ENCODE measurements at regions of chr16 and their contacts with region 1.

Region 1: DNA sequence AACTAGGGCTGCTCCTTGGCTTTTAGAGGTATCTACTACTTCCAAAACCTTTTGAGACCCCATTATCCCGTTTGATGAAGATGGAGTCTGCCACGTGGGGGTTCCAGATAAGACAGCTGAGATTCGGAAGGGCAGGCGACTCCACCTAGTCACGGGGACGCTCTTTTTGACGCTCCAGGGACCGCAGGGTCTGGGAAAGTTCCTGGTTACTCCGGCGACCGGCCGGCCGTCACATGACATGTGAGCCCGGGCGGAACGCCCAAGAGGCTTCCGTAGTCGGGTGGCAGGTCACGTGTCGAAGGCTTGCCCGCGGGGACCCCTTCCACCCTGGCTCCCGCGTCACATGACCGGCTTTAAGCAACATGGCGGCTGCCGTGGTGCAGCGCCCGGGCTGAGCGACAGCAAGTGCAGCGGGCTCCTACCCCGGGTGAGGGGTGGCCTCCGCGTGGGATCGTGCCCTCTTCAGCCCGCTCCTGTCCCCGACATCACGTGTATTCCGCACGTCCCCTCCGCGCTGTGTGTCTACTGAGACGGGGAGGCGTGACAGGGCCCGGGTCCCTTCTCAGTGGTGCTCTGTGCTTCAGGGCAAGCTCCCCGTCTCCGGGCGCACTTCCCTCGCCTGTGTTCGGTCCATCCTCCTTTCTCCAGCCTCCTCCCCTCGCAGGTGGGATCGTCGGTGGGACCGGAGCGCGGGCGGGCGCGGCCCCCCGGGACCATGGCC is at the start of gene SPNS1:
- DNase-seq: peak; percentile 97
- ATAC-seq: peak; percentile 96
- H3K4me3 Mint-ChIP-seq: peak within 1 kb of the TSS; percentile 98
- H3K27ac Mint-ChIP-seq: peak within 1 kb of the TSS; percentile 97
- H3K4me1 Mint-ChIP-seq: peaks cover 35% of the 10 kb centered on the region
- H3K27me3 Mint-ChIP-seq: no peaks in the 10 kb centered on the region
- total RNA-seq, gene SPNS1: 28.3 to 29.0 TPM

Region 2: DNA sequence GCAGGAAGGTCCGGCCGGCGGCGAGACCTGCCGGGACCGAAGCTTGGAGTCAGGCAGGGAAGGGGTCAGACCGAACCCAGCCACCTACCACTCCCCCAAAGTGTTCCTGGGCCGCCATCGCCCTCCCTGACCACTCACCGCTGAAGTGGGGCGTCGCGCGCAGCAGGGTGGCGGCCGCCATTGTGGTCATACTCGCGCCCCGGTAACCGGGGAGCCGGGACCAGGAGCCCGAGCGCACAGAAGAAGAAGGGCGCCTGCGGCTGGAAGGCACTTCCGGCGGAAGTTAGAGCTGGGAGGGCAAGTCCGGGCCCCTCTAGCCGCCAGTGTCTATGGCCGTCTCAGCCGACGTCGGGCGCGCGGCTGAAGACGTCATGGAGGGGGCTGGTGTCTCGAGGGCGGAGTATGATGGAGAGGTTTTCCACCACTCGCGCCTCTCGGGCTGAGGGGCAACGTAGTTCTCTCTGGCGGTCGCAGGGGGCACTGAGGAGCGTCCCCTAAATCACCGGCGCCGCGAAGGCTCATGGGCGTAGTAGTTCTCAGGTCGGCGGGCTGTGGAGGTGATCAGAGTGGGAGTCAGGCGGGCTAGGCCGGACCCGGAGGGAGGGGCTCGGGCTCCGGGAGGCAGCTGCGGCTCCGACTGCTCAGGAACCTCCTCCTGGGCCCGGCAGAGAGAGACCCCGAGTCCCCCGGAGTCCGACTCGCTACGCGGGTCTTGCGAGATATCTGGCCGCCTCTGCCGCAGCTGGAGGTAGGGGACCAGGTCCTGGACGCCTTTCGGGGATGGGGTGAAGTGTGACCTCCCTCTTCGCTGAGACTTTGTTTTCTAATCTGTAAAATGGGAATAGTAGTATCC is 128.3 kb before region 1 on chr16 and contains the start of gene TUFM:
- CTCF ChIA-PET with region 1: no interaction called
- POLR2A ChIA-PET with region 1: no interaction called
- DNase-seq: peak; percentile 99
- ATAC-seq: peak; percentile 92
- H3K4me3 Mint-ChIP-seq: peak within 1 kb of the TSS; percentile 92
- H3K27ac Mint-ChIP-seq: peak within 1 kb of the TSS; percentile 94
- H3K4me1 Mint-ChIP-seq: peaks cover 27% of the 10 kb centered on the region
- H3K27me3 Mint-ChIP-seq: no peaks in the 10 kb centered on the region
- total RNA-seq, gene TUFM: 150 to 153 TPM

Region 3: GRCh38 chr16:28902909-28903308 is 71.7 kb before region 1 on chr16:
- CTCF ChIA-PET with region 1: no interaction called
- POLR2A ChIA-PET with region 1: no interaction called
- DNase-seq: no peak
- ATAC-seq: no peak
- H3K4me3 Mint-ChIP-seq: no peak overlapping the region
- H3K27ac Mint-ChIP-seq: no peak overlapping the region
- H3K4me1 Mint-ChIP-seq: peaks cover 9% of the 10 kb centered on the region
- H3K27me3 Mint-ChIP-seq: no peaks in the 10 kb centered on the region

Region 4: GRCh38 chr16:28958836-28959235 is 15.8 kb before region 1 on chr16:
- CTCF ChIA-PET with region 1: interaction called, 11 read pairs
- POLR2A ChIA-PET with region 1: no interaction called
- DNase-seq: no peak
- ATAC-seq: no peak
- H3K4me3 Mint-ChIP-seq: no peak overlapping the region
- H3K27ac Mint-ChIP-seq: peak overlapping the region; percentile 43
- H3K4me1 Mint-ChIP-seq: peaks cover 5% of the 10 kb centered on the region
- H3K27me3 Mint-ChIP-seq: no peaks in the 10 kb centered on the region

Measured in activated CD8-positive, alpha-beta T cell treated with anti-CD3 and anti-CD28 coated beads, Interleukin-2, amount 10 ng/mL, durations not matched to agents 7 days and 5 days (primary cell).